ENCODE measurements at regions of chr6 and their contacts with region 1.

Region 1: GRCh38 chr6:32984605-32985389 is 16.4 kb downstream of the BRD2 start:
- DNase-seq: peak; percentile 91
- H3K4me3 Mint-ChIP-seq: no peak overlapping the region
- H3K27ac Mint-ChIP-seq: peak overlapping the region; percentile 37
- H3K4me1 Mint-ChIP-seq: peaks cover 42% of the 10 kb centered on the region
- H3K27me3 Mint-ChIP-seq: peaks cover under 1% of the 10 kb centered on the region

Region 2: GRCh38 chr6:32692019-32692418 is 292.8 kb before region 1 on chr6:
- CTCF ChIA-PET with region 1: no interaction called
- POLR2A ChIA-PET with region 1: no interaction called
- DNase-seq: peak; percentile 70
- H3K4me3 Mint-ChIP-seq: no peak overlapping the region
- H3K27ac Mint-ChIP-seq: no peak overlapping the region
- H3K4me1 Mint-ChIP-seq: peaks cover 12% of the 10 kb centered on the region
- H3K27me3 Mint-ChIP-seq: peaks cover 57% of the 10 kb centered on the region

Region 3: DNA sequence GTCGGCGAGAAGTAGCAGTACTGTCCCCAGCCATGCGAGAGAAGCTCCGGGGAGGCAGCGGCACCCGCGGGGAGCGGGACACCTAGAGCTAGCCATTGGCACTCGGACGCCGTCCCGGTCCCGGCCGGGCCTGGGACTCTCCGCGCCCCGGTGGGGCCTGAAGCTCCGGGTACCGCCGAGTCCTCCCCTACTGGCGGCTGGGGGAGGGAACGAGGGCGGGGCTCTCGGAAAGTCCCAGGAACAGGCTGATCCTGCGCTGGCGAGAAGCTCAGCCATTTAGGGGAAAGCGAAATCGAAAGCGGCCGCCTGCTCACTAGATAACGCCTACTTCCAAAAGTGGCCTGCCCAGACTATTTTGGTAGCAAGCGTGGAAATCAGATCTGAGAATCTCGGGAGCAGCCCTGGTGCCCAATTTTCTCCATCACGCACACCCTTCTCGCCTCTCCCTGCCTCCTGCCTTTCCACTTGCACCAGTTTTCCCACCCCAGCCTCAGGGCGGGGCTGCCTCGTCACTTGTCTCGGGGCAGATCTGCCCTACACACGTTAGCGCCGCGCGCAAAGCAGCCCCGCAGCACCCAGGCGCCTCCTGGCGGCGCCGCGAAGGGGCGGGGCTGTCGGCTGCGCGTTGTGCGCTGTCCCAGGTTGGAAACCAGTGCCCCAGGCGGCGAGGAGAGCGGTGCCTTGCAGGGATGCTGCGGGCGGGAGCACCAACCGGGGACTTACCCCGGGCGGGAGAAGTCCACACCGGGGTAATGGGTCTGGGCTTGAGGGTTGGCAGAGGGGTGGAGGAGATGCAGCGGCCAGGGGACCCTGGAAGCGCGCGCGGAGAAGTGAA is 131.0 kb before region 1 on chr6 and contains the starts of genes PSMB9 and TAP1:
- CTCF ChIA-PET with region 1: interaction called, 11 read pairs
- POLR2A ChIA-PET with region 1: interaction called, 4 read pairs
- DNase-seq: peak; percentile 95
- H3K4me3 Mint-ChIP-seq: peak within 1 kb of the TSS; percentile 100
- H3K27ac Mint-ChIP-seq: peak within 1 kb of the TSS; percentile 99
- H3K4me1 Mint-ChIP-seq: peaks cover 59% of the 10 kb centered on the region
- H3K27me3 Mint-ChIP-seq: no peaks in the 10 kb centered on the region
- total RNA-seq, gene PSMB9: 368 to 372 TPM
- total RNA-seq, gene TAP1: 410 to 412 TPM

Region 4: DNA sequence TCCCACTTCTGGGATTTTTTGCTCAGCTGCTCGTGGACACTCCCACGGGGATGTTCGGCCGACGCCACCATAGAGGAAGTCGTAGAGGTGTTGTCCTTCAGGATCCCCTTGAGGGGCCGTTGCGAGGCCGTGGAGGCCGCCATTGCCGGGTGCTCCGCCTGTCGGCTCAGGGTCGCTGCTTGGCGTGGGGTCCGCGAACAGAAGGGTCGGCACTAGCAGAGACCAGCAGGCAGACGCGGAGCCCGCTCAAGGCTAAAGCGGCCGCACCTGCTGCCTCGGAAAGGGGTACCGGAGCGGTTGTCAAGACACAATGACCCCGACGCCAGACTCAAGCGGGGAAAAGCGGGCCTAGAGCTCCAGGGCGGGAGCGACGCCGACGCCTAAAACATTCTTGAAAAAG is 105.1 kb before region 1 on chr6:
- CTCF ChIA-PET with region 1: interaction called, 70 read pairs
- POLR2A ChIA-PET with region 1: no interaction called
- DNase-seq: no peak
- H3K4me3 Mint-ChIP-seq: no peak overlapping the region
- H3K27ac Mint-ChIP-seq: no peak overlapping the region
- H3K4me1 Mint-ChIP-seq: peaks cover 2% of the 10 kb centered on the region
- H3K27me3 Mint-ChIP-seq: no peaks in the 10 kb centered on the region

Region 5: DNA sequence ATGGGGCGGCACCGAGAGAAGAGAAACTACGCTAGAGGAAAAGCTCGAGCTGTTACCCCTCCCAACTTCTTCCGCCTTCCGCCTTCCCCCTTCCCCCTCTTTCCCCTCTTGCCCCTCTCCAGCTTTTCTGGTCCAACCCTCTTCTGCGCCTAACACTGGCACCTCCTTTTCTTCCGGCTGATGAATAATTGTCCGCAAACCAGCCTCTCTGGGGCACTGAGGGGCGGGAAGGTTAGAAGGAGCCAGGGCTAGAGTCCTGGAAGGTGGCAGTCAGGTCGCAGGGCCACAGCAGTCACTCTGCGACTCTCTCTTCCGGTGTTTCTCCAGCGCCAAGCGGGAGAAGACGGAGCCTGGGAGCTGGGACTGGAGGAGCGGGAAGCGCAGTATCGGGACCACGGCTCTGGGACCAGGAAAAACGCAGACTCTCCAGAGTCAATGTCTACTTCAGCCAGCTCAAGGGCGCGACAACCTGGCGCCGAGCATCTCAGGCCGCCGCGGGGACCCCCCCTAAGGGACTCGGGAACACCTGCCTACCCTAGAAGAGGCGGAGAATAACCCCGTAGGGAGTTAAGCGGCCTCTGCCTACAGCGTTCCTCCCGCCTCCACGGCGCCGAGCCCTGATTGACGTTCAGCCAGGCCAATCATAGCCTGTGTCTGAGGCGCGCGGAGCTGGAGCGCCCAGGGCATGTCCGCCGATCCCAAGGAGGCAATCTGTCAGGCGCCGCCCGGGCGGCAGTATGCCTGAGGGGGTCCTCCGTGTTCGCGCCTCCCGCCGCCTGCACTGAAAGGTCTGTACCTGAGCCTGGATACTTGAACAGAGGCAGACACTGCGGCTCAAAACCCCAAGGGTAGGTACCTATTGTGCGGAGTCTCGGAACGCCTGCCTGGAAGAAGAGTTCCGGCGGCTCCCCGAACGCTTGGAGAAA is 90.5 kb before region 1 on chr6:
- CTCF ChIA-PET with region 1: interaction called, 16 read pairs
- POLR2A ChIA-PET with region 1: interaction called, 9 read pairs
- DNase-seq: peak; percentile 95
- H3K4me3 Mint-ChIP-seq: peak overlapping the region; percentile 99
- H3K27ac Mint-ChIP-seq: peak overlapping the region; percentile 91
- H3K4me1 Mint-ChIP-seq: peaks cover 40% of the 10 kb centered on the region
- H3K27me3 Mint-ChIP-seq: peaks cover 8% of the 10 kb centered on the region

Region 6: DNA sequence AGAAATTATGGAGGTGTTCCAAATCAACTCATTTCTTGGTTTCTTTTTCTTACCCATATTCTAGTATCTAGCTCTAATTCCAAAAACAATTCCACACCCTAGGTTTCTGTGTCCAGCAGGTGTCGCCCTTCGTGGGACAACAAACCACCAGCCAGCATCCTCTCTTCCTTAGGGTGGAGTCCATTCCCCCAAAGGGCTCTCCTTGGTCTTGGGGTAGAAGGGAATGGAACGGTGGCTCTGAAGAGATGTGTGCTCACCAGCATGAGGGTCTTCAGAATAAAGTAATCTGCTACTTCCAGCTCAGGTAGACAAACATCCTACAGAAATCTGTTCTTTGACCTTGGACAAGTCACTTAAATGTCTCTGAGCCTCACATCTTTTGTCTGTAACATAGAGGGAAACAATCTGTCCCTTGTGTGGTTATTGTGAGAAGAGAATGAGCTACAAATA is 51.1 kb before region 1 on chr6:
- CTCF ChIA-PET with region 1: interaction called, 140 read pairs
- POLR2A ChIA-PET with region 1: interaction called, 19 read pairs
- DNase-seq: peak; percentile 79
- H3K4me3 Mint-ChIP-seq: no peak overlapping the region
- H3K27ac Mint-ChIP-seq: no peak overlapping the region
- H3K4me1 Mint-ChIP-seq: peaks cover 16% of the 10 kb centered on the region
- H3K27me3 Mint-ChIP-seq: peaks cover 2% of the 10 kb centered on the region

Region 7: GRCh38 chr6:32947552-32948465 is 37.0 kb before region 1 on chr6:
- CTCF ChIA-PET with region 1: interaction called, 64 read pairs
- POLR2A ChIA-PET with region 1: interaction called, 18 read pairs
- DNase-seq: peak; percentile 51
- H3K4me3 Mint-ChIP-seq: no peak overlapping the region
- H3K27ac Mint-ChIP-seq: no peak overlapping the region
- H3K4me1 Mint-ChIP-seq: peaks cover 63% of the 10 kb centered on the region
- H3K27me3 Mint-ChIP-seq: no peaks in the 10 kb centered on the region

Region 8: DNA sequence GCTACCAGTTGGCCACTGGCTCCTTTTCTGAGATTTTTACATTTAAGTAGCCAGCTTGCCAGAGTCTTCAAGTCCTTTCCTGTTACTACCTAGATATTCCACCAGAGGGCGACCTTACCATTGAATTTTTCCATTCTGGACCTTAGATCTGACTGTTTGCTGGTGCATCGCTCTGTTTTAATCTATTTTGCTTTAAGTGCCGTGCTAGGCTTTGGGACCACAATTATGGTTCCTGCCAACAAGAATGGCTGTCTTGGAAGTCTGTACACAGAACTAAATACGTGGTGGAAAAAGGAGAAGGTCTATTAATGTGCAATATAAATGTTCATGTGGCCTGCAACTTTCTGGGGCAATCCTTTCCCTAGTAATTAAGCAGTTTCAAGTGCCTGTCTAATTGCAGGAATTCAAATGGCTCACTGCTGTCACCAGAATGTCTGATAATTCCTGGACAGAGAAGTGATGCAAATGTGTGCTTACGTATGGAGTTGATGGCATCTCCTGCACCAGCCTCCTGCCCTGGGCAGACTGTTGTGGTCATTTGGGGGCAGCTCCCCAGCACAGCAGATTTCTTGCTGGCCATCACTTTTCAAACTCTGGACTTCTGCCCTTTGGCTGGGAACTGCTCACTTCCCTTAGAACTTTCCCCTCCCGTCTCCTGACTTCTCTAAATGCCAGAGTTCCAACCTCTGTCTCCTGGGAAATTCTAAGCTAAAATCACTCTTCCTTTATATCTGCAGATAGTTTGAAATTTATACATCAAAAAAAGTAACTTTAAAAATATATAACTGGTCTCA is 30.2 kb after region 1 on chr6:
- CTCF ChIA-PET with region 1: interaction called, 10 read pairs
- POLR2A ChIA-PET with region 1: no interaction called
- DNase-seq: peak; percentile 45
- H3K4me3 Mint-ChIP-seq: no peak overlapping the region
- H3K27ac Mint-ChIP-seq: no peak overlapping the region
- H3K4me1 Mint-ChIP-seq: peaks cover 22% of the 10 kb centered on the region
- H3K27me3 Mint-ChIP-seq: peaks cover 46% of the 10 kb centered on the region